ENCODE measurements at regions of chr12 and their contacts with region 1.

Region 1: DNA sequence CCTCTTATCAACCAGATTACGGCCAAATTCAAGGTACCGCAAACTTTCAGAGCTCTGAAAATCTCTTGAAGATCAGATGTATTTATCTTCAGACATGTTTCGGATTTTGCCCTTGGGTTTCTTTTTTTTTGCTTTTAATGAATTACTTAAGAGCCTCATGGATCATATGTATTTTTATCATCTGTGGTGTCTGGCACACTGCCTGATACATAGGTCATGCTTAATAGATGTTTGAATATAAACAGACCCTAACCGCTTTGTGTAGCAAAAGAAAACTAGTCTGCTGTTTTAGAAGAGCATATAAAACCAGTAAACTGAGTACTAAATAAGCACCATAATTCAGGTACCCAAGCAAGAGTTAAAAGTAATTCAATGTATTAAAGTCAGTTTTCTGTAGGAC is 20.1 kb upstream of the TBK1 start:
- DNase-seq: no peak
- ATAC-seq: no peak
- H3K4me3 ChIP-seq: no peak overlapping the region
- H3K4me3 Mint-ChIP-seq: no peak overlapping the region
- H3K27ac ChIP-seq: no peak overlapping the region
- H3K27ac Mint-ChIP-seq: no peak overlapping the region
- H3K4me1 ChIP-seq: no peaks in the 10 kb centered on the region
- H3K4me1 Mint-ChIP-seq: peaks cover 0 to 6% (median 0%) of the 10 kb centered on the region in 7 donors
- H3K27me3 ChIP-seq: no peaks in the 10 kb centered on the region
- H3K27me3 Mint-ChIP-seq: no peaks in the 10 kb centered on the region

Region 2: DNA sequence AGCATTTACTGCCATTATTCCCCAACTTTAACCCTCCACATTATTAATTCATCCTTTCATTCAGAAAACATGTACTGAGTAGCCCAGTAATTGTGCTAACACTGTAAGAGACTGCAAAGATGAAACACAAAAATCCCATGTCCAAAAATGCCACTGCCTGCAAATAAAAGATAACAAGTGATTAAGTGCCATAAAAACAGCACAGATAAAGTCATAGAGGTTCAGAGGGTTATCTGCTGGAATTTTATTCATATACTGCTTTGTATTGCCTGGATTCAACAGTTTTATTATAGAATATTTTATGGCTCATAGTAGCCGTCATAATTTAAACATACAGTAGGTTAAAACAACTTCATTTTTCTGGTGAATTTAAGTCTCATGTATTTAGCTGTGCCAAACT is 387.6 kb before region 1 on chr12:
- CTCF ChIA-PET with region 1: no interaction called
- POLR2A ChIA-PET with region 1: no interaction called
- intact Hi-C with region 1: no loop called
- DNase-seq: no peak
- ATAC-seq: no peak
- H3K4me3 ChIP-seq: no peak overlapping the region
- H3K4me3 Mint-ChIP-seq: no peak overlapping the region
- H3K27ac ChIP-seq: no peak overlapping the region
- H3K27ac Mint-ChIP-seq: no peak overlapping the region
- H3K4me1 ChIP-seq: no peaks in the 10 kb centered on the region
- H3K4me1 Mint-ChIP-seq: no peaks in the 10 kb centered on the region
- H3K27me3 ChIP-seq: no peaks in the 10 kb centered on the region
- H3K27me3 Mint-ChIP-seq: peaks cover 0 to 18% (median 5%) of the 10 kb centered on the region in 5 donors

Region 3: DNA sequence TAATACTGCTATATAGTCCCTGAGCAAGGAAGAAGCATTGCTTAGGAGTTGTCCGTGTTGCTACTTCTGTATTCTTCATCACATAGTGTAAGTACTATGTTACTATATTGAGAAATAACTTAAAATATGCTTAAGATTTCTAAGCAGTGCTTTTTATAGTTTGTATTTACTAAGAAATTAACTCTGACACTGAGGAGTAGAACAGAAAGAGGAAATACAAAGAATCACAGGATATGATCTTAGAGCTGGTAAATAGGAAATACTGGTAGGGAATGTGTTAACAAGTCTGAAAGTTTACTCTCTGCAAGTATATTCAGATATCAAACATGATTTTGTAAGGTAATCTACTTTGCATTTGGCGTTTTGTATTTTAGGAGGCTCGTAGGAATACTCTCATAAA is 12.1 kb before region 1 on chr12:
- CTCF ChIA-PET with region 1: no interaction called
- POLR2A ChIA-PET with region 1: interaction called, 4 read pairs
- intact Hi-C with region 1: loop called in 1 of 2 experiments (anchors 2 kb)
- DNase-seq: no peak
- ATAC-seq: no peak
- H3K4me3 ChIP-seq: no peak overlapping the region
- H3K4me3 Mint-ChIP-seq: no peak overlapping the region
- H3K27ac ChIP-seq: no peak overlapping the region
- H3K27ac Mint-ChIP-seq: peak overlapping the region in 1 of 9 donors; percentile 1
- H3K4me1 ChIP-seq: no peaks in the 10 kb centered on the region
- H3K4me1 Mint-ChIP-seq: peaks cover 0 to 13% (median 0%) of the 10 kb centered on the region in 7 donors
- H3K27me3 ChIP-seq: no peaks in the 10 kb centered on the region
- H3K27me3 Mint-ChIP-seq: no peaks in the 10 kb centered on the region

Region 4: GRCh38 chr12:64445490-64445889 is 13.7 kb after region 1 on chr12:
- CTCF ChIA-PET with region 1: no interaction called
- POLR2A ChIA-PET with region 1: no interaction called
- intact Hi-C with region 1: loop called in 1 of 2 experiments (anchors 2 kb)
- DNase-seq: no peak
- ATAC-seq: no peak
- H3K4me3 ChIP-seq: no peak overlapping the region
- H3K4me3 Mint-ChIP-seq: no peak overlapping the region
- H3K27ac ChIP-seq: no peak overlapping the region
- H3K27ac Mint-ChIP-seq: peak overlapping the region in 6 of 9 donors; percentile 14 to 79 (median 54)
- H3K4me1 ChIP-seq: peaks cover under 1 to 12% of the 10 kb centered on the region in 2 donors
- H3K4me1 Mint-ChIP-seq: peaks cover 12 to 38% (median 31%) of the 10 kb centered on the region in 7 donors
- H3K27me3 ChIP-seq: no peaks in the 10 kb centered on the region
- H3K27me3 Mint-ChIP-seq: no peaks in the 10 kb centered on the region

Region 5: DNA sequence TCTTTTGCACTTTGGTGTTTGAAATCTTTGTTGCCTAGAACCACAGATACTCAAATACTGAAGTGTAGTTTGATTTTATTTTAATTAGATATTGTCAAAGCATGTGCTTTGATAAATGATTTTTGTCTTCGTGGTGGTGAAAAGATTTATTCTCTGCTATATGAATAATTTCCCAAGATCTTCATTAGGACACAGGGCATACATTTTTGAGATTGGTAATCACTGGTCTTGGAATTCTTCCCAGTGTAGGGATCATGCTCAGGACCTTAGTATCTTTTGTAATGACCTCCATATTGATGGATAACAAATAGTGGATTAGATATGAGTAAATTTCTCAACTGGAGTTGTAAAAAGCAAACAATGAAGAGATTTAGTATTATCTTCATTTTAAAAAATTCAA is 48.4 kb after region 1 on chr12:
- CTCF ChIA-PET with region 1: no interaction called
- POLR2A ChIA-PET with region 1: no interaction called
- intact Hi-C with region 1: no loop called
- DNase-seq: no peak
- ATAC-seq: no peak
- H3K4me3 ChIP-seq: no peak overlapping the region
- H3K4me3 Mint-ChIP-seq: no peak overlapping the region
- H3K27ac ChIP-seq: no peak overlapping the region
- H3K27ac Mint-ChIP-seq: no peak overlapping the region
- H3K4me1 ChIP-seq: no peaks in the 10 kb centered on the region
- H3K4me1 Mint-ChIP-seq: peaks cover 0 to 4% (median 0%) of the 10 kb centered on the region in 7 donors
- H3K27me3 ChIP-seq: no peaks in the 10 kb centered on the region
- H3K27me3 Mint-ChIP-seq: no peaks in the 10 kb centered on the region

Measured in naive thymus-derived CD4-positive, alpha-beta T cell (primary cell).